ENCODE measurements at regions of chr6 and their contacts with region 1.

Region 1: GRCh38 chr6:35025232-35026178 is 115.6 kb downstream of the TCP11 start:
- DNase-seq: peak; percentile 35 to 61 (median 53)
- H3K4me3 ChIP-seq: no peak overlapping the region
- H3K27ac ChIP-seq: no peak overlapping the region
- H3K4me1 ChIP-seq: peaks cover 5 to 47% (median 19%) of the 10 kb centered on the region in 4 experiments
- H3K27me3 ChIP-seq: no peaks in the 10 kb centered on the region

Region 2: DNA sequence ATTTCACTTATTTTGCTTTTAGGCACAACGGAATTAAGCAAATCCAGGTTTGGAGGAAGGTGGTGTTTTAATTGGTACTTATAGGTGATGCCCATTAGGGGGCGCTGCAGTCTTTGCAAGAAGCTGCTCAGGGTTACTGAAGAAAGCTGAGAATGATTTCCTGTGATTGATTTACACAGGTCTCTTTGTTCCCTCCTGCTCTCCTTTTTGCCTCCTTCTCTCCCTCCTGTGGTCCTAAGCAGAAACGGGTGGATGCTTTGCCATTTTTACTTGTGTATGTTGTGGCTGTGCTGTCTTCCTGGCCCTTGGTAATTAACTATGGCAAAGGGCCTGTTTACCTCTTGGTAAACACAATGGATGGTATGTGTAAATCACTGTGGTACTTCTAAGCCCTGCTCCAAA is 38.7 kb before region 1 on chr6:
- CTCF ChIA-PET with region 1: interaction called, 12 read pairs
- POLR2A ChIA-PET with region 1: no interaction called
- DNase-seq: peak; percentile 76 to 89 (median 88)
- H3K4me3 ChIP-seq: no peak overlapping the region
- H3K27ac ChIP-seq: no peak overlapping the region
- H3K4me1 ChIP-seq: peaks cover 0 to 6% (median 5%) of the 10 kb centered on the region in 4 experiments
- H3K27me3 ChIP-seq: no peaks in the 10 kb centered on the region

Region 3: DNA sequence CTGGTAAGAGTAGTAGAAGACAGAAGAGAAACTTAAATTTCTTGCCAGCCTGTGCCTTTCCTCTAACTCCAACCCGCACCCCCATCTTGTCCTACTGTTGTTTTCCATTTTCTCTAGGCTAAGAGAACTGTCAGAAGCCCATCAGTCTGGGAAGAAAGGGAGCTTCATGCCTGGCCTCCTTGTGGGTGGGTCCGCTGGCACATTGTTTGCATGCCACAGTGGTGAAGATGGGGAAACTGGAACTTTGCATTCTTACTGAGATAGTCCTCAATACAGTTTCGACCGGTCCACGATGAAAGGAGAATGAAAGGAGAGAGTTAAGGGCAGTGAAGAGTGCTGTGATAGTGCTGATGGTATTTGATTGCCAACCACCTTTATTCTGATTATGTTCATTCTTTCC is 12.6 kb after region 1 on chr6:
- CTCF ChIA-PET with region 1: interaction called, 17 read pairs
- POLR2A ChIA-PET with region 1: no interaction called
- DNase-seq: no peak
- H3K4me3 ChIP-seq: no peak overlapping the region
- H3K27ac ChIP-seq: no peak overlapping the region
- H3K4me1 ChIP-seq: peaks cover 22 to 70% (median 61%) of the 10 kb centered on the region in 4 experiments
- H3K27me3 ChIP-seq: no peaks in the 10 kb centered on the region

Region 4: DNA sequence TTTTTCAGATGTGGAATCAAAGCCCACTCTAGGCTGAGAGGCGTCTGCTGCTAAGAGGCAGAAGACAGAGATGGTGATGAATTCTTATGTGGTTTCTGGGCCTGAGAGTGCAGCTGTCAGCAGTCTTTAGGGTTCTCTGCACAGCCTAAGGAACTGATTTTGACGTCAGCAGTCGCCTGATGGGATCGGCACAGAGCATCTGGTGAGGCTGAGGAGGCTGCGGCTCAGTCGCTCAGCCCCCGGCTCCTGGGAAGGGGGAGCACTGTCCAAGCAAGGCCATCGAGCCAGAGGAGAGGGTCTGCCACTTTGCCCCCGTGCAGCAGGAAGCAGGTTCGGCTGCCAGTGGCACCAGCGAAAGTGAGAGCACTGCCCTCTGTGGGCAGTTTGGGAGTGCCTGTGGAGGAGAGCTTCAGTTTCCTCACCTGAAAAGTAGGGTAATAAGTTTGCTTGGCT is 23.2 kb after region 1 on chr6:
- CTCF ChIA-PET with region 1: interaction called, 49 read pairs
- POLR2A ChIA-PET with region 1: no interaction called
- DNase-seq: peak; percentile 48 to 87 (median 80)
- H3K4me3 ChIP-seq: peak overlapping the region in 2 of 7 experiments; percentile 4 to 16
- H3K27ac ChIP-seq: peak overlapping the region; percentile 64 to 80
- H3K4me1 ChIP-seq: peaks cover 54 to 97% (median 92%) of the 10 kb centered on the region in 4 experiments
- H3K27me3 ChIP-seq: no peaks in the 10 kb centered on the region